Psoas muscle (tissue), 8 donors: ENCODE measurements at regions of chr14 and their contacts with region 1.

Region 1: GRCh38 chr14:106327234-106327633 is 800.9 kb downstream of the TMEM121 start:
- DNase-seq: no peak
- ATAC-seq: no peak
- H3K4me3 ChIP-seq: no peak overlapping the region
- H3K27ac ChIP-seq: no peak overlapping the region
- H3K4me1 ChIP-seq: no peaks in the 10 kb centered on the region
- H3K27me3 ChIP-seq: no peaks in the 10 kb centered on the region
- CTCF ChIP-seq: no peak

Region 2: GRCh38 chr14:105974902-105975301 is 352.3 kb before region 1 on chr14:
- intact Hi-C with region 1: no loop called
- DNase-seq: no peak
- ATAC-seq: no peak
- H3K4me3 ChIP-seq: no peak overlapping the region
- H3K27ac ChIP-seq: no peak overlapping the region
- H3K4me1 ChIP-seq: no peaks in the 10 kb centered on the region
- H3K27me3 ChIP-seq: no peaks in the 10 kb centered on the region
- CTCF ChIP-seq: no peak

Region 3: DNA sequence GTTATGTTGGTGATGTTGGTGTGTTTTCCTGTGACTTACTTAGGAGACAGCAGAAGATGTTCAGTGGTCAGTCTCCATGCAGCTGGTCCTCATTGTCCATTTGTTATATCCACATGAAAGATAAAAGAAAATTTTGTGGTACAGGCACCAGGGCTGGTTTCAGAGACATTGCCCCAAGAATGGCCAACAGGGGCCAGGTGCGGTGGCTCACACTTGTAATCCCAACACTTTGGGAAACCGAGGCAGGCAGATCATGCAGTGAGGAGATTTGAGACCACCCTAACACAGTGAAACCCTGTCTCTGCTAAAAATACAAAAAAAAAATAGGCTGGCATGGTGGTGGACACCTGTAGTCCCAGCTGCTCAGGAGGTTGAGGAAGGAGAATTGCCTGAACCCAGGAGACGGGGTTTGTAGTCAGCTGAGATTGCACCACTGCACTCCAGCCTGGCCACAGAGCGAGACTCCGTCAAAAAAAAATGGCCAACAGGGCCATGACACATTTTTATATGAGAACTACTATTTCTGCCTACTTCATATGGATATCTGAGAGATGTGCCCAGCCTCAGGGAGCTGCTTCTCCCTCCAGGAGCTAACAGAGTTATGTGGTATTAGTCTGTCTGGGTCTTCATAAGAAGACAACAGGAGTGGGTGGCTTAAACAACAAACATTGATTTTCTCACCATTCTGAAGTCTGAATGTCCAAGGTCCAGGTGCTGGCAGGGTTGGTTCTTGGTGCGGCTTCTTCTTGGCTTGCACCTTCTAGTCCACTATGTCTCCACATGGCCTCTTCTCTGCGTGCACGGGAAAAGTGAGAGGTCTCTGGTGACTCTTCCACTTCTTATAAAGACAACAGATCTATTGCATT is 20.9 kb after region 1 on chr14:
- intact Hi-C with region 1: loop called in 1 of 2 experiments (anchors 2 kb)
- DNase-seq: no peak
- ATAC-seq: no peak
- H3K4me3 ChIP-seq: no peak overlapping the region
- H3K27ac ChIP-seq: no peak overlapping the region
- H3K4me1 ChIP-seq: no peaks in the 10 kb centered on the region
- H3K27me3 ChIP-seq: no peaks in the 10 kb centered on the region
- CTCF ChIP-seq: no peak

Region 4: DNA sequence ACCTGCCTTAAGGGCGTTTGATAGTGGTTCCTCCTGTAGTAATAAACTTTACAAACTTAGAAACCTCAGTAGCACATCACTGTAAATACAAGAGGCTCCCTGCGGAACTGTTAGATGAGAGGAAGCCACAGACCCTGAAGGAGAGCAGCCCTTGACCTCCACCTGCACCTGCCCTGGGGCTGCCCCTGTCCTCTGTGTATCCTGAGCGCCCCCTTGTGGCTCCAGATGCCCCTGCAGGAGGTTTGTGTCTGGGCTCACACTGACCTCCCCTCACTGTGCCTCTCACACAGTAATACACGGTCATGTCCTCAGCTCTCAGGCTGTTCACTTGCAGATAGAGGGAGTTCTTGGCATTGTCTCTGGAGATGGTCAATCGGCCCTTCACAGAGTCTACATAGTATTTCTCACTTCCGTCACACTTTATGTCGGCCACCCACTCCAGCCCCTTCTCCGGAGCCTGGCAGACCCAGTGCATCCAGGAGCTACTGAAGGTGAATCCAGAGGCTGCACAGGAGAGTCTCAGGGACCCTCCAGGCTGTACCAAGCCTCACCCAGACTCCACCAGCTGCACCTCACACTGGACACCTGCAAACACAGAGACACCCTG is 259.0 kb after region 1 on chr14:
- intact Hi-C with region 1: no loop called
- DNase-seq: no peak
- ATAC-seq: no peak
- H3K4me3 ChIP-seq: no peak overlapping the region
- H3K27ac ChIP-seq: no peak overlapping the region
- H3K4me1 ChIP-seq: no peaks in the 10 kb centered on the region
- H3K27me3 ChIP-seq: no peaks in the 10 kb centered on the region
- CTCF ChIP-seq: no peak